CD8-positive, alpha-beta memory T cell (primary cell): ENCODE measurements at regions of chr19 and their contacts with region 1.

Region 1: GRCh38 chr19:19531951-19532805 is 3.5 kb downstream of the YJEFN3 start:
- DNase-seq: peak; percentile 74 to 87 (median 82)
- H3K4me3 ChIP-seq: no peak overlapping the region
- H3K4me3 Mint-ChIP-seq: no peak overlapping the region
- H3K27ac ChIP-seq: no peak overlapping the region
- H3K27ac Mint-ChIP-seq: peak overlapping the region; percentile 47 to 97 (median 64)
- H3K4me1 ChIP-seq: peaks cover 9% of the 10 kb centered on the region
- H3K4me1 Mint-ChIP-seq: peaks cover 5 to 14% (median 5%) of the 10 kb centered on the region in 3 donors
- H3K27me3 ChIP-seq: no peaks in the 10 kb centered on the region
- H3K27me3 Mint-ChIP-seq: no peaks in the 10 kb centered on the region

Region 2: GRCh38 chr19:19500975-19501644 is 31.1 kb before region 1 on chr19:
- CTCF ChIA-PET with region 1: no interaction called
- POLR2A ChIA-PET with region 1: no interaction called
- DNase-seq: no peak
- H3K4me3 ChIP-seq: no peak overlapping the region
- H3K4me3 Mint-ChIP-seq: no peak overlapping the region
- H3K27ac ChIP-seq: no peak overlapping the region
- H3K27ac Mint-ChIP-seq: no peak overlapping the region
- H3K4me1 ChIP-seq: no peaks in the 10 kb centered on the region
- H3K4me1 Mint-ChIP-seq: peaks cover 0 to 4% (median 3%) of the 10 kb centered on the region in 3 donors
- H3K27me3 ChIP-seq: no peaks in the 10 kb centered on the region
- H3K27me3 Mint-ChIP-seq: peaks cover 0 to 5% of the 10 kb centered on the region in 2 donors

Region 3: DNA sequence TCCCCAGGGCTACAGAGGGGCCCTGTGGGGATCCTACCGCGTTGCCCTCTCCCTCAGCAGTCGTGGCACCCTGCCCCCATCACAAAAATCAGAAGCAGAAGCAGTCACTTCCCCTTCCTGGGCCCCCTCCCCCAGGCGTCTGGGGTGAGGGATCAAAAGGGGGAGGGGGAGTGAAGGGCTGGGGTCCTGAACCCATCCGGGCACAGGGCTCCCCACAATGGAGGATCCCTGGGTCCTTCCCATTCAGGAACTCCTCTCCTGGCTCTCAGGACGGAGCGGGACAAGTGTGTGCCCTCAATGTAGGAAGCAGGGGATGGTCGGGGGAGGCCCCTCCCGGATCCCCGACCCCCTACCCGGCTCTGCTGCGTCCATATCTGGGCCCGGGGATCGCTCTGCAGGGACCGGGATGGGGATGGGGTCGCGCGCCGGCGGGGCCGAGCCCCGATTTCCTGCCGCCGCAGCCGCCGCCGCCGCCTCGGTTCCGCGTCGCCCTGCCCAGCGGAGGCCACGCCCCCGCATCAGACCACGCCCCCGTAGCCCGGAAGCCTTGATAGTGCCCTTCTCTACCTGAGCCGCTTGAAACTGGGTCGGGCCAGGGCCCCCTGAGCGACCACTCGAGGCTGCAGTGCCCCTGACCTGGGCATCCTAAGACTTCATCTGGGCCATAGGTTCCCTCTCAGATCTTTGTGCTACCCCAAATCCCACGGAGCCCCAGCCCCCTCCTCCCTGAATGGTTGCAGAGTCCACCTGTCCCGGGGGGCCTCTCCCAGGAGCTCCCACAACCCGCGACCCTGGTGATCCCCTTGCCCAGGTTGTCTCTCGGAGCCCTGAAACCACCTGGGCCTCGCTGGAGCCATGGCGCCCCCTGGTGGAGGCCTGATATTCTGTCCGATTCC is 111.2 kb after region 1 on chr19 and contains the start of gene GMIP:
- CTCF ChIA-PET with region 1: interaction called, 50 read pairs
- POLR2A ChIA-PET with region 1: interaction called, 6 read pairs
- DNase-seq: peak; percentile 83 to 94 (median 86)
- H3K4me3 ChIP-seq: peak within 1 kb of the TSS; percentile 99
- H3K4me3 Mint-ChIP-seq: peak within 1 kb of the TSS; percentile 91 to 100 (median 98)
- H3K27ac ChIP-seq: peak within 1 kb of the TSS; percentile 84
- H3K27ac Mint-ChIP-seq: peak within 1 kb of the TSS; percentile 90 to 100 (median 97)
- H3K4me1 ChIP-seq: peaks cover 20% of the 10 kb centered on the region
- H3K4me1 Mint-ChIP-seq: peaks cover 13 to 29% (median 18%) of the 10 kb centered on the region in 3 donors
- H3K27me3 ChIP-seq: no peaks in the 10 kb centered on the region
- H3K27me3 Mint-ChIP-seq: no peaks in the 10 kb centered on the region
- total RNA-seq, gene GMIP: 54.5 to 60.3 TPM

Region 4: DNA sequence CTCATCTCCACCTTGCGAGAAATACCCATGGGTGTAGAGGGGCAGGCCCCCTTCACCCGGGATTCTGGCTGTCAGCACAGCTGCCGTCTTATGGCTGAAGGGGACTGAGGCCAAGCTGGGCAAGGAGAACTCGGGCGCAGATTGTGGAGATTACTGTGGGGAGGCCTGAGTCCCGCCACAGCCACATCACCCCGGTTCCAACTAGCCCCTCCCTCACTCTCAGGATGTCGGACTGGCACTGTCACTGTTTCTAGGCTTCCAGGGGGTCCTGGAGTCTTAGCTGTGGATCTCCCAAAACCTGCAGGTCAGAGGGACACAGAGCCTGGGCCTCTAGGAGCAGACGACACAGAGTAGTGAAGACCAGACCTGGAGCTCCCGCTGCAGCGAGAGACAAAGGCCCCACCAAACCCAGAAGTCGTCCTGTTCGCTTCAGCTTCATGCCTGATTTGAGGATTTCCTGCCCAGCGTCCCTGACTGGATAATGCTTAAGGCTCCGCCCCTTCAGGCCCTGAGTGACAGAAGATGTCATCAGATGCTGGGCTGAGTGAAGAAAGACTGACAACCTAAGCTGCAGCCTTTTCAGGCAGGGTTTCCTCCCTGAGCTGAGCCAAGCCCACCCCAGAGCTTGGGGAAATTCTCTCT is 424.4 kb after region 1 on chr19:
- CTCF ChIA-PET with region 1: interaction called, 34 read pairs
- POLR2A ChIA-PET with region 1: no interaction called
- DNase-seq: no peak
- H3K4me3 ChIP-seq: no peak overlapping the region
- H3K4me3 Mint-ChIP-seq: no peak overlapping the region
- H3K27ac ChIP-seq: no peak overlapping the region
- H3K27ac Mint-ChIP-seq: no peak overlapping the region
- H3K4me1 ChIP-seq: no peaks in the 10 kb centered on the region
- H3K4me1 Mint-ChIP-seq: peaks cover 0 to 7% (median 3%) of the 10 kb centered on the region in 3 donors
- H3K27me3 ChIP-seq: no peaks in the 10 kb centered on the region
- H3K27me3 Mint-ChIP-seq: peaks cover 0 to 2% of the 10 kb centered on the region in 2 donors